ENCODE measurements at regions of chr18 and their contacts with region 1.

Region 1: DNA sequence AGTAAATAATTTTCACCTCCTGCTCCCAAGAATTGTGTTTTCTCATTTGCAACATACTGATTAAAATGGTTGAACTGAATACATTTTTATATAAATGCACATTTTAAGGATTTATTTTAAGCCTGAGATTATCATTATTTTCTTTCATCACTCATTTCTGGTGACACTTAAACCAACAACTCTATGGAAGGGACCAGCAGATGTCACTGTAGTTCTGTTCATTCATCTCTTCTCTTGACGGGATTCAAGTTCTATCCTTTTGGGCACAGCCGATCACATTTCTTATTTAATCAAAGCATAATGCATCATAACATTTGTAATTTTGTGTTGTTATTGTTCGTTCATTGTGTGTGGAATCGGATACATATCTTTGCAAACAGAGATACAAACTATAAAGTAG is 417.9 kb downstream of the HRH4 start:
- DNase-seq: no peak
- ATAC-seq: peak; percentile 55 to 72
- H3K4me3 ChIP-seq: no peak overlapping the region
- H3K27ac ChIP-seq: no peak overlapping the region
- H3K4me1 ChIP-seq: no peaks in the 10 kb centered on the region
- H3K27me3 ChIP-seq: no peaks in the 10 kb centered on the region

Region 2: GRCh38 chr18:24112874-24113615 is 765.2 kb before region 1 on chr18:
- intact Hi-C with region 1: no loop called
- DNase-seq: no peak
- ATAC-seq: peak in 1 of 2 donors; percentile 44
- H3K4me3 ChIP-seq: no peak overlapping the region
- H3K27ac ChIP-seq: no peak overlapping the region
- H3K4me1 ChIP-seq: no peaks in the 10 kb centered on the region
- H3K27me3 ChIP-seq: no peaks in the 10 kb centered on the region

Region 3: DNA sequence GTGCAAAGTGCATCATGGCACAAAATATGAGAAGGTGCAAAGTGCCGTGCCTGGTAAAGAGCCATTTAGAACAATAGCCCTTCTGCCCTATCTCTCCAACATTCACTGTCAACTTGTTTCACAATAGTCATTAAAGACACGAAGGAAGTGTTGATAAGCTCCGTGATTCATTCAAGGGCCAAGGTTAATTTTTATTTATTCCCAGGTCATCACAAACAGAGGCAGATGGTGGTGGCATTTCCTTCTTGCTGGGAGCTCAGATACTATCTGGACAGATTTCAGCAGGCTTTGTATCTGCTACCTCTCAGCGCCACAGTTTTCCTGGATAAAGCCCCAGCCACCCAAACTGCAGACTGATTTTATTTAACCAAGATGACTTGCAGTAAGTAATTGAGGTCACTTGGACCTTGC is 164.4 kb after region 1 on chr18:
- intact Hi-C with region 1: no loop called
- DNase-seq: no peak
- ATAC-seq: peak; percentile 63 to 72
- H3K4me3 ChIP-seq: no peak overlapping the region
- H3K27ac ChIP-seq: no peak overlapping the region
- H3K4me1 ChIP-seq: no peaks in the 10 kb centered on the region
- H3K27me3 ChIP-seq: no peaks in the 10 kb centered on the region

Region 4: DNA sequence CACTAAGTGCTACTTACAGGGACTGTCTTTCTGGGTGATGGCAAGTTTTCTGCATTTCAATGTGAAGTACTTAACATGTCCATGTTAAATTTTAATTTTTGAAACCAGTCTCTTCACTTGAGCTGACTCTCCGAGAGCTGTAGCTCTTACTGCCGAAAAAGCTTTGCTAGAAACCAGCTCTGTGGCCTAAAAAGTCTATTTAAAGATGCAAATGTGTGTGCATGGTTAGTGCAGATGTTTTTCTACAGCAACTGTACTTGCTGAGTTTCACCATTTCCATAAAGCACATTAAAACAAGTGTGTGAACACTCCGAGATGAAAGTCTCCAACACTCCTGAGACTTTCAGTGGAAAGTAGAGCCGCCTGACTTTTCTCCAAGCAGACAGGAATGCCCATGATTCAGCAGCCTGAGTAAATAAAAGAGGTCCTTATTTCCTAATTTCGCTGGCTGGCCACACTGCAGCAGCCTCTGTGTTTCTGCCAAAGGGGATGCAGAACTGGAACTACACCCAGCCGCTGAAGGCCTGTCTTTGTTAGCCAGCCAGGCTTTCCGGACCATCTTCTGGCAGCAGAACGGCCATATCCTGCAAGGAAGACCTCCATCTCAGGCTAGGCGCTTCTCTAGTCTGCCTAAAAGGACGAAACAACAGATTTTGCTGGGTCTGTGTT is 352.5 kb after region 1 on chr18:
- intact Hi-C with region 1: loop called in 1 of 4 experiments (anchors 10 kb)
- DNase-seq: peak; percentile 85 to 91 (median 87)
- ATAC-seq: peak; percentile 91 to 92
- H3K4me3 ChIP-seq: no peak overlapping the region
- H3K27ac ChIP-seq: peak overlapping the region; percentile 85
- H3K4me1 ChIP-seq: peaks cover 9% of the 10 kb centered on the region
- H3K27me3 ChIP-seq: no peaks in the 10 kb centered on the region

Region 5: DNA sequence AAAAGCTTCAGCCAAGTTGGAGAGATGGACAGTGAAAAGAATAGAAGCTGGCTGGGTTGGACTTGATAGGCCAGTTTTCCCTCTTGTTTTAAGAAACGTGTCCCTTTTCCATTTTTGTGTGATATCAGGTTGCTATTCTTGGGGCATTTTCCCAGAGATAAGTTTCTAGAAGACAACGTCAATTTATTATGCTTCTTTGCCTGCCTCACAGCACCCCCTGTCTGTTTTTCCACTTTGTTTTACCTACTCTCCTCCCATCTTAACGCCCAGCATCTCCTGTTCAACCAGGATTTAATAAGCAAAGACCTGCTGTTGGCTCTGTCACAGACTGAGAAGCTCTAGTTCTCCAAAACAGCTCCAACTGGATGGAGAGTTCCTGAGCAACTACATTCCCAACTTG is 791.5 kb after region 1 on chr18:
- intact Hi-C with region 1: loop called in 1 of 4 experiments (anchors 5 kb)
- DNase-seq: no peak
- ATAC-seq: no peak
- H3K4me3 ChIP-seq: no peak overlapping the region
- H3K27ac ChIP-seq: no peak overlapping the region
- H3K4me1 ChIP-seq: no peaks in the 10 kb centered on the region
- H3K27me3 ChIP-seq: no peaks in the 10 kb centered on the region

Region 6: GRCh38 chr18:25832001-25832604 is 953.8 kb after region 1 on chr18:
- intact Hi-C with region 1: loop called in 3 of 4 experiments (anchors 2 to 5 kb)
- DNase-seq: peak; percentile 74 to 90 (median 85)
- ATAC-seq: peak; percentile 88 to 91
- H3K4me3 ChIP-seq: no peak overlapping the region
- H3K27ac ChIP-seq: no peak overlapping the region
- H3K4me1 ChIP-seq: no peaks in the 10 kb centered on the region
- H3K27me3 ChIP-seq: no peaks in the 10 kb centered on the region

Region 7: DNA sequence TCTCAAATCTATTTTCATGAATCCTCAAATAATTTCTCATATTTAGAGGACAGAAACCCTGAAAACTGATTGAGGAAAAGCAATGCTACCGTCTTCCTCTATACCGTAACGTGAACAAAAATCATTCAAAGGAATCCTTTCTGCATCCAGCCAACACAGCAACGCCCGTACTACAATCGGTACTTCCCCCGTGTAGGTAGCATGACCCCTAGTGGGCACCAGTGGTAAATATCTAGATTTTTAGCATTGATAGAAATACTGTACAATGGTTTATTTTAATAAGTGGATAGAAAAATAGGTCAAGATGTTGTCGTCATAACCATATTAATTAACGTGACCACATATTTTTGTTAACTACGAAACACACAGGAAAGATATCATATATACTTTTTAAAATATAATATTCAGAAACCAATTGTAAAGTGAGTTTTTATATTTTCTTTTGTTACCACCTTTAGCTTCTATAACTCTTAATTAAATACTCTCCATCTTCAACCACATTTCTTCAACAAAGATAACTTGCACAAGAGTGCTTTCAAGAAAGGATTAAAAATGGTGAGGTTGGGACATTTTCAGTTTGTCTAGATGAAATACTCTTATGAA is 1018.0 kb after region 1 on chr18:
- intact Hi-C with region 1: loop called (anchors 5 to 10 kb)
- DNase-seq: peak in 1 of 3 donors; percentile 19
- ATAC-seq: peak in 1 of 2 donors; percentile 67
- H3K4me3 ChIP-seq: no peak overlapping the region
- H3K27ac ChIP-seq: no peak overlapping the region
- H3K4me1 ChIP-seq: no peaks in the 10 kb centered on the region
- H3K27me3 ChIP-seq: no peaks in the 10 kb centered on the region